ENCODE measurements at regions of chr1 and their contacts with region 1.

Region 1: GRCh38 chr1:153545067-153546055 is at the start of gene S100A4:
- DNase-seq: peak; percentile 95 to 97
- H3K4me3 ChIP-seq: no peak within 1 kb of the TSS
- H3K4me3 Mint-ChIP-seq: peak within 1 kb of the TSS; percentile 71
- H3K27ac Mint-ChIP-seq: peak within 1 kb of the TSS; percentile 95
- H3K4me1 ChIP-seq: peaks cover 58% of the 10 kb centered on the region
- H3K4me1 Mint-ChIP-seq: peaks cover 51% of the 10 kb centered on the region
- H3K27me3 ChIP-seq: no peaks in the 10 kb centered on the region
- H3K27me3 Mint-ChIP-seq: no peaks in the 10 kb centered on the region
- CTCF ChIP-seq: no peak
- total RNA-seq, gene S100A4: 53.6 and 54.4 TPM in 2 replicates

Region 2: GRCh38 chr1:153532769-153533599 is 12.4 kb before region 1 on chr1:
- CTCF ChIA-PET with region 1: interaction called, 16 read pairs
- POLR2A ChIA-PET with region 1: interaction called, 13 read pairs
- intact Hi-C with region 1: loop called (anchors 1 kb)
- DNase-seq: peak; percentile 77 to 84
- H3K4me3 ChIP-seq: peak overlapping the region; percentile 21
- H3K4me3 Mint-ChIP-seq: peak overlapping the region; percentile 95
- H3K27ac Mint-ChIP-seq: peak overlapping the region; percentile 72
- H3K4me1 ChIP-seq: peaks cover 37% of the 10 kb centered on the region
- H3K4me1 Mint-ChIP-seq: peaks cover 31% of the 10 kb centered on the region
- H3K27me3 ChIP-seq: no peaks in the 10 kb centered on the region
- H3K27me3 Mint-ChIP-seq: no peaks in the 10 kb centered on the region
- CTCF ChIP-seq: peak; percentile 74 to 91